ENCODE measurements at regions of chr19 and their contacts with region 1.

Region 1: DNA sequence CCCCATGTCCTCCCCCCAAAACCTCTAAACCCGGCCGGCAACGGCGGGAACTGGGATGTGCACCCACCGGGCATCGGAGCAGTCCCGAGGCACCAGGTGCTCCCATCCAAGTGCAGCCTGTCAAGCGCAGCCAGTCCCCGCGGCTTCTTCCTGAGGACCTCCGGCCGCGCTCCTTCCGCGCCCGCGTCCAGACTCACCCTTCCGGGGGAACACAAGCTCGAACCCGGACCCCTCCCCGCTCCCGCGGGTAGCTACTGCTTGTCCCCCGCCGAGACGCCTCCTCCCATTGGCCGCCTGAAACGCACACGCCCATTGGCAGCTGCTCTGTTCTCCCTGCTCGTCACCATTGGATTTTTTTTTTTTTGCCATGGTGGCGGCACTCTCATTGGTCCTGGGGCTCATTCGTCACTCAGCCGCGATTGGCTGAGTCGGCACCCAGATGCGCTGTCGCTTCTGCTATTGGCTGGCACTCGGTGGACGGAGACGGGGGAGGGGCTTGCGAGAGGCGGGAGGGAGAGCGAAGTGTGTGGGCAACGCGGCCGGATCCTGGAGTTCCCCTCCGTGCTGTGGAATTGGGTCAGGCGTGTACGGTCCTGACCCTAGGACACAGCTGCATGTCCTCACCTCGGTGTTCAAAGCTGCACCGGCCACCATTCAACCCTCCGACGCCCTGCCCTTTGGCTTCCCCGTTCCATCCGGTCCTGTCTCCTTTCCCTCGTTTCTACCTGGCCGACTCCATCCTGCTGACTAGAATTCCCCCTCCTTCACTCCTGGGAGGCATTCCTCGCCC is at the start of gene TYK2:
- DNase-seq: peak; percentile 97
- H3K4me3 ChIP-seq: peak within 1 kb of the TSS; percentile 82
- H3K27ac ChIP-seq: no peak within 1 kb of the TSS
- H3K4me1 ChIP-seq: peaks cover 6% of the 10 kb centered on the region
- H3K27me3 ChIP-seq: no peaks in the 10 kb centered on the region
- CTCF ChIP-seq: no peak
- total RNA-seq, gene TYK2: 94.7 and 102 TPM in 2 replicates

Region 2: DNA sequence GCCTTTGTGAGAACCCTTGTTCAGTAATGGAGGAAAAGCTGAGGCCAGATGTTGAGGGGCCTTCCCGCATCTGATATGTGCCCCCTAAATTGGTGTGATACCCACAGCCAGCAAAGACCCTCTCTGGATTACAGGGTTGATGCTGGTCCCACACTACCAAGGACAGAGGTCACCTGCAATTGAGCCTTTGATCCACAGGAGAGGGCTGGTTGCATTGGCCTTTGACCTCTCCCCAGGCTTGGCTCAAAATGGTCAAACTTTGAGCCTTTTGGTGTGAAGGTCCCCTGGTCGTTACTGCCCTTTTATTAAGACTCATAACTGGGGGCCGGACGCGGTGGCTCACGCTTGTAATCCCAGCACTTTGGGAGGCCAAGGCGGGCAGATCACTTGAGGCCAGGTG is 136.9 kb before region 1 on chr19:
- CTCF ChIA-PET with region 1: no interaction called
- POLR2A ChIA-PET with region 1: no interaction called
- intact Hi-C with region 1: no loop called
- DNase-seq: no peak
- H3K4me3 ChIP-seq: no peak overlapping the region
- H3K27ac ChIP-seq: no peak overlapping the region
- H3K4me1 ChIP-seq: peaks cover 16% of the 10 kb centered on the region; the same call in 1 of the 2 replicates
- H3K27me3 ChIP-seq: no peaks in the 10 kb centered on the region
- CTCF ChIP-seq: no peak

Region 3: DNA sequence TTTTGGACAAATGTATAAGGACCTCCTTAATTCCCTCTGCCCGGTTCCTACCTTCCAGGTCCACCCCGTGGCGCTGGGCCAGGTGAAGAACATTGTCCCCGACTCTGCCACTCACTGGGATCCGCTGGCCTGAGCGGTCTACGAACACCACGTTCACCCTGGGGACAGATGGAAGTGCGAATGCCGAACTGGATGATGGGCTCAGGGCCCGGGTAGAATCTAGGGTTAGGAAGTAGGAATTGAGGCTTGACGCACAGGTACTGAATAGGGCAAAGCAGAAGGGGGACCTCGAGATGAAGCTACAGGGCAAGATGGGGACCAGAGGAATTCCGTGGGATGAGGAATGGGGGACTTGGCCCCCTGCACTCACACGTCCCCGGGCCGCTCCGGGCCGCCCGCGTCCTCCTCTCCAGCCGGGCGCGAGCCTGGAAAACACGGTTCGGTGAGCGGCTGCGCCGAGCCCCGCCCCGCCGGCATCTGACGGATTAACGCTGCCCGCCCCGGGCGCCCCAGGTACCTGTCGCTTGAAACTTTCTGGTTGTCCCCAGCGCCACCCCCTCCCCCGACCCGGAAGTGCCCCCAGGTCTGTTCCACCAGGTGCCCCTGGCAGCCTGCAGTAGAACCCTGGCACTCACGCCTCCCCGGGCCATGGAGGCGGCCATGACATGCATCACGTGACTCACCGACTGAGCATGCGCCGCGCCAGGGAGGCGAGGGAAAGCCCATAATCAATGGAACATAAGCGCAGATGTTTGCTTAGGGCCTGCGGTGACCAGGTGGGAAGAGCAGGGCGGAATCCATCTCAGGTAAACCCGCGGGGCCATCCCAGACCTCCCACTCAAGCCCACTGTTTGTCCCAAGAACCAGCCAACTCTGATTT is 64.9 kb before region 1 on chr19 and contains the start of gene FDX2:
- CTCF ChIA-PET with region 1: no interaction called
- POLR2A ChIA-PET with region 1: interaction called, 12 read pairs
- intact Hi-C with region 1: no loop called
- DNase-seq: peak; percentile 85 to 87
- H3K4me3 ChIP-seq: peak within 1 kb of the TSS; percentile 96
- H3K27ac ChIP-seq: peak within 1 kb of the TSS; percentile 38
- H3K4me1 ChIP-seq: peaks cover 14% of the 10 kb centered on the region
- H3K27me3 ChIP-seq: no peaks in the 10 kb centered on the region
- CTCF ChIP-seq: no peak
- total RNA-seq, gene FDX2: 23.1 and 29.2 TPM in 2 replicates

Region 4: DNA sequence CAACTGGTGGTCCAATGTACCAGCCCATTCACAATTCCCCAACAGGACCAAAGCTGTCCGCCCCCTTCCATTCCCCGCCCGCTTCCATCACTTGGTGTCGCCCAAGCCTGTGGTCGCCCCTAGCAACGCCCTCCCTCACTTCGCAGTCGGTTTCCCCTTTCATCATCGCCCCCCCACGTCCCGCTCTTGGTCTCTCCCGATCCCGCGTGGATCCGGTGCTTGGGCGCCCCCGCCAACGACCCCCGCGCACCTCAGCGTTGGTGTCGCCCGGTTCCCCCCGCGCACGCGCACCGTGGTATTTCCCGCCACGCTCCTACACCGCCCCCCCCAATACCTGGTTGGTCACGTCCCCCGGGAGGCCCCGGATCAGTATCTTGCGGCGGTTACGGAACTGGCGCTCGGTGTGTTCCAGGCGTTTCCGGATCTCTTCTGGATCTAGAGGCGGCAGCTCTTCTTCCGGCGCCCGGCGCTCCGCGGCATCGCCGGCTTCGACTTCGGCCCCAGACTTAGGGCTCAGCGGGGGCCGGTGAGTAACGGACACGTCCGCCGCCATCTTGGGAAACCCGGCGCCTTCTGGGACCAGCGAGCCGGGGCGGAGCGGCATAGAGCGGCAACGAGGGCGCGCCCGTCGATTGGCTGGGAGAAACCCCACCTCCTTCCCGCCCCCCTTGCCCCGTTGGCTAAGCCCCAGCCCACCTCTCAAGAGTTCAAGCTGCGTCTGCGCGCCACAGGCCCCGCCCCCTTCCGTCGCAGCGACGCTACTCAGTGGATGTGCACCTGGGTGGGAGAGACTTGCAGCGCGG is 47.4 kb before region 1 on chr19 and contains the start of gene RAVER1:
- CTCF ChIA-PET with region 1: no interaction called
- POLR2A ChIA-PET with region 1: no interaction called
- intact Hi-C with region 1: loop called (anchors 5 kb)
- DNase-seq: peak; percentile 91 to 95
- H3K4me3 ChIP-seq: peak within 1 kb of the TSS; percentile 78
- H3K27ac ChIP-seq: peak within 1 kb of the TSS; percentile 55
- H3K4me1 ChIP-seq: peaks cover 10% of the 10 kb centered on the region
- H3K27me3 ChIP-seq: no peaks in the 10 kb centered on the region
- CTCF ChIP-seq: no peak
- total RNA-seq, gene RAVER1: 52.9 and 83.9 TPM in 2 replicates

Region 5: GRCh38 chr19:10353793-10354391 is 26.6 kb before region 1 on chr19:
- CTCF ChIA-PET with region 1: no interaction called
- POLR2A ChIA-PET with region 1: no interaction called
- intact Hi-C with region 1: no loop called
- DNase-seq: no peak
- H3K4me3 ChIP-seq: no peak overlapping the region
- H3K27ac ChIP-seq: no peak overlapping the region
- H3K4me1 ChIP-seq: no peaks in the 10 kb centered on the region
- H3K27me3 ChIP-seq: no peaks in the 10 kb centered on the region
- CTCF ChIP-seq: no peak

Measured in PC-9 (cell line).